ENCODE measurements at regions of chr21 and their contacts with region 1.

Region 1: DNA sequence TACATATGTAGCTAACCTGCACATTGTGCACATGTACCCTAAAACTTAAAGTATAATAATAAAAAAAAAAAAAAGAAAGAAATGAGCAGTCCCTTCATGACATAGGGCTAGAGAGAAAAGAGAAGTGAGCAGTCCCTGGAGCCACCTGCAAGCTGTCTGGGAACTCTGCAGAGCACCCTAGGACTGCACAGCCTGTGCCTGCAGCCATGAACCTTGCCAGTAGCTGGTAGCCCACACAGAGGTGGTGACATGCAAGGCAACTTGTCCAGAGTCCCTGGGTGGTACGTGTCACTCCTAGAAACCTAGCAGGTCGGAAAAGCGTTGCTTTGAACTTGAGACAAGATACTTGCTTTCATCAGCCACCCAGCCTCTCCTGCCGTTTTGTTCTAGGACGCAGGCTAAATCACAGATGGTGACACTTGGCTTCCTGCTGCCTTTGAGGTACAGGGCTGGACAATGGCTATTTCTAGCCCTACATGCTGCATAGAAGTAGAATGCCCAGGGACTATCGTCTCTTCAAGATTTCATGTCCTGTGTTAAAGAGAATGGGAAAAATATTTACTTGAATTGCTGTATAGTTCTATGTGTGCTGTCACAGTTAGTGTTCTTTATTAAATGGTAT is 260.9 kb downstream of the LTN1 start:
- DNase-seq: no peak
- ATAC-seq: no peak

Region 2: GRCh38 chr21:28308516-28308915 is 423.3 kb before region 1 on chr21:
- intact Hi-C with region 1: no loop called
- DNase-seq: no peak
- ATAC-seq: no peak

Region 3: DNA sequence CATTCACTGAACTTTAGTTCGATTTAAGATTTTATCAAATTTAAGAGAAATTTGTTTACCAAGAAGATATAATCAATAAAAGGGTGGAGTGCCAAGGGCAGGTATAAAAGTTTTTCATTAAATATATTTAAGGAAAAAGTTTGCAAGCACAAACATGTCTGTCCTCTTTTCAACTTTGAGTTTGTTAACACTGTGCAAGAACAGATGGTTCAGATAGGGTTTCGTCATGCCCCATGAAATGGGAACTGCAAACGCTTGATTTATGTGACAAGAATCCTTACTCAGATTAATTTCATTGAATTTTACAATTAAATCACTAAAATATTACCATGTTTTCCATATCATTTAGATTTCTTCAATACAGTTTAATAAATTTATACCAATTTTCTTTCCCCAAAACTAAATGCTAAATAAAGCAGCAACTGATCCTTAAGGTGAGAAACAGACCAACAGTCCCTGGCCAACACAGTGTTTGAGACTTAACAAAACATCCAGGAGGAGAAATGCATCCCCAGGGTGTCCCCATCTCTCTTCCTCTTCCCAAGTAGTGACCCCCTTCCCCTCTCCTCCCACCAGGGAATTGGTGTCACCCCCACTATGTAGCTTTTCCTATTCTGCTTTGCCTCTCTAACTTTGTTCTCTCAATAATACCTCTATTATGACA is 32.1 kb before region 1 on chr21:
- intact Hi-C with region 1: loop called (anchors 1 kb)
- DNase-seq: no peak
- ATAC-seq: no peak

Region 4: DNA sequence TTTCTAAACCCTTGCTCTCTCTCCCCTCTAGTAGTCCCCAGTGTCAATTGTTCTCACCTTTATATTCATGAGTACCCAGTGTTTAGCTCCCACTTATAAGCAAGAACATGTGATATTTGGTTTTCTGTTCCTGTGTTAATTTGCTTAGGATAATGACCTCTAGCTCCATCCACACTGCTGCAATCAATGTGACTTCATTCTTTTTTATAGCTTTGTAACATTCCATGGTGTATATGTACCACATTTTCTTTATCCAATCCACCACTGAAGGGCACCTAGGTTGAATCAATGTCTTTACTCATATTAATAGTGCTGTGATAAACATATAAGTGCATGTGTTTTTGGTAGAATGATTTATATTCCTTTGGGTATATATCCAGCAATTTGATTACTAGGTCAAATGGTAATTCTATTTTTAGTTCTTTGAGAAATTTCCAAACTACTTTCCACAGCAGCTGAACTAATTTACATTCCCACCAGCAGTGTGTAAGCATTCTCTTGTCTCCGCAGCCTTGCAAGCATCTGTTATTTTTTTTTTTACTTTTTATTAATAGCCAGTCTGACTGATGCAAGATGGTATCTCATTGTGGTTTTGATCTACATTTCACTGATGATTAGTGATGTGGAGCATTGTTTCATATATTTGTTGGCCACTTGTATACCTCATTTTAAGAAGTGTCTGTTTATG is 16.9 kb before region 1 on chr21:
- intact Hi-C with region 1: no loop called
- DNase-seq: no peak
- ATAC-seq: no peak